ENCODE measurements at regions of chr6 and their contacts with region 1.

Region 1: GRCh38 chr6:119736296-119737021 is 386.9 kb upstream of the MAN1A1 start:
- DNase-seq: no peak
- ATAC-seq: no peak
- H3K4me3 ChIP-seq: no peak overlapping the region
- H3K4me3 Mint-ChIP-seq: no peak overlapping the region
- H3K27ac ChIP-seq: no peak overlapping the region
- H3K27ac Mint-ChIP-seq: no peak overlapping the region
- H3K4me1 ChIP-seq: no peaks in the 10 kb centered on the region
- H3K4me1 Mint-ChIP-seq: no peaks in the 10 kb centered on the region
- H3K27me3 ChIP-seq: no peaks in the 10 kb centered on the region
- H3K27me3 Mint-ChIP-seq: peaks cover 8% of the 10 kb centered on the region
- CTCF ChIP-seq: no peak

Region 2: DNA sequence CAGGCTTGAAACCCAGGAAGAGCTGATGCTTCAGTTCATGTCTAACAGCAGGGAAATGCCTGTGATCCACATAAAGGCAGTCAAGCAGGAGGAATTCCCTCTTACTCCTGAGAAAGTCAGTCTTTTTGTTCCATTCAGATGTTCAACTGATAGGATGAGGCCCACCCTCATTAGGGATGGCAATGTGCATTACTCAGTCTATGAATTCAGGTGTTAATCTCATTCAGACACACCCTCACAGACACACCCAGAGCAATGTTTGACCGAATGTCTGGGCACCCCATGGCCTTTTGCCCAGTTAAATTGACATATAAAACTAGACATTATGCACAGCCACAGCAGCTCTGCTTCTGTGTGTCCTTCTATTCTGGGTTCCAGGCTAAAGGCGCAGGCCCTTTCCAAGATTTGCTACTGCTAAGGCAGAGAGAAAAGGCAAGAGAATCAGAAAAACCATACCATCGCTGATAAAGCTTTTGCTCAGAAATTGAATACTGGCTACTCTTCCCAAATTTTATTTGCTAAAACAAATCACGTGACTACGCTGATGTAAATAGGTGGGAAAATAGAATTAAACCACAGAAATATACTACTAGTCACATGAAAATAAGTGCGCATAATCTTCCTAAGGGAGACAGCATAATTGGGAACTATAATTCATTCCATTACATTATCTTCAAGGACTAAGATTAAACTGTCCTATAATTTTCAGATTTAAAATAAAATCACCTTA is 238.1 kb after region 1 on chr6:
- CTCF ChIA-PET with region 1: no interaction called
- POLR2A ChIA-PET with region 1: no interaction called
- intact Hi-C with region 1: no loop called
- DNase-seq: no peak
- ATAC-seq: no peak
- H3K4me3 ChIP-seq: no peak overlapping the region
- H3K4me3 Mint-ChIP-seq: no peak overlapping the region
- H3K27ac ChIP-seq: no peak overlapping the region
- H3K27ac Mint-ChIP-seq: no peak overlapping the region
- H3K4me1 ChIP-seq: no peaks in the 10 kb centered on the region
- H3K4me1 Mint-ChIP-seq: no peaks in the 10 kb centered on the region
- H3K27me3 ChIP-seq: no peaks in the 10 kb centered on the region
- H3K27me3 Mint-ChIP-seq: no peaks in the 10 kb centered on the region
- CTCF ChIP-seq: no peak

Region 3: GRCh38 chr6:121305957-121306607 is 1569.6 kb after region 1 on chr6:
- CTCF ChIA-PET with region 1: no interaction called
- POLR2A ChIA-PET with region 1: no interaction called
- intact Hi-C with region 1: loop called in 1 of 2 experiments (anchors 5 kb)
- DNase-seq: peak in 2 of 9 experiments; percentile 28 to 38
- ATAC-seq: no peak
- H3K4me3 ChIP-seq: no peak overlapping the region
- H3K4me3 Mint-ChIP-seq: no peak overlapping the region
- H3K27ac ChIP-seq: no peak overlapping the region
- H3K27ac Mint-ChIP-seq: no peak overlapping the region
- H3K4me1 ChIP-seq: no peaks in the 10 kb centered on the region
- H3K4me1 Mint-ChIP-seq: no peaks in the 10 kb centered on the region
- H3K27me3 ChIP-seq: no peaks in the 10 kb centered on the region
- H3K27me3 Mint-ChIP-seq: no peaks in the 10 kb centered on the region
- CTCF ChIP-seq: peak; percentile 59